AG04450 (cell line): ENCODE measurements at regions of chr2 and their contacts with region 1.

Region 1: DNA sequence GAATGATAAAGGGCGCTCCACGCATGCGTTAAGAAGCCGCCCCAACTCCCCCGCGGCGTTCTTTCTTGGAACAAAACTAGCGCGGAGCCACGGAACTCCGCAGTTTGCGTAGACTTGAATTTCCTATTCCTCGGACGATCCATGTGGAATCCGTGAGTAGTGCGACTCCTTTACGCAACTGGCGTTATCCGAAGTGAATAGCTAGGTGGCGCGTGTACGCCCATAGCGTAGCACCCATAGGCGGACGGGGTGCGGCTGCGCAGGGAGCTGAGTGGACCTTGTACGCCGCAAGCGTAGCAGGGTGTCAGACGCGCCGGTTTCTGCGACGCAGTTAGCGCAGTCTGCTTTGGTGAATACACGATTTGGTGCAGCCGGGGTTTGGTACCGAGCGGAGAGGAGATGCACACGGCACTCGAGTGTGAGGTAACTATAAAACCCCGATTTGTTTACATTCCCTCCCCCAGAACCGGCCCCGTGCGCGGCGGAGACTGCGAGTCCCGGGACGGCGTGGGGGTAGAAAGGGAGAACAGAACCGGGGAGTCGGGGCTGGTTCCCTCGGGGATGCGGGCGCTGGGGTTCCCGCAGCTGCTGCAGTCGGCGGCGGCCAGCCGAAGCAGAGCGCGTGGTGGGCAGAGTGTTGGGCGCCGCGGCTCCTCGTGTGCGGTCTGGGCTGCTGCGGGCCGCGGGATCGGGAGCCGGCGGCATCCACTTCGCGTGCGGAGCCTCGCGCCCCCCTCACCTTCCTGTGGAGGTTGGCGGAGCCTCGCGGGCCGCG is at the start of gene SLC39A10:
- DNase-seq: peak; percentile 96
- H3K4me3 ChIP-seq: peak within 1 kb of the TSS; percentile 83
- H3K27ac ChIP-seq: peak within 1 kb of the TSS; percentile 98
- H3K27me3 ChIP-seq: no peaks in the 10 kb centered on the region
- CTCF ChIP-seq: no peak
- polyA plus RNA-seq, gene SLC39A10: 26.1 and 38.5 TPM in 2 replicates

Region 2: DNA sequence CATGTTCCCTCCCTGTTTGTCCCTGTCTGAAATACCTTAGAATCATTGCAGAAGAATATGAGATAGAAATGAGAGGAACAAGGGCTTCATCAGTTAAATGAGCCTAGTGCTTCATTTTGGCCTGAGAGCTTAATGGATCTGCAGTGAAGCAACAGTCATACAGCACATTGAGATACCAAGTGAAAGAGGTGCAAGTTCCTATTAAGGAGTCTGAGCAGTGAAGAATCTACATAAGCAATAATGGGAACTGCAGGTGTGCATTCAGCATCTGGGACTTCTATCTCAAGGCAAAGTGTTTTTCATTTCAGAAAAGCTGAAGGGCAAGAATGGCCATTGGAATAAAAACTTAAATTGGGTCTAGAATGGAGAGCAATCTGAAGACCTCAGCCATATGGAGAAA is 323.2 kb before region 1 on chr2:
- CTCF ChIA-PET with region 1: interaction called, 11 read pairs
- POLR2A ChIA-PET with region 1: no interaction called
- DNase-seq: no peak
- H3K4me3 ChIP-seq: no peak overlapping the region
- H3K27ac ChIP-seq: no peak overlapping the region
- H3K27me3 ChIP-seq: no peaks in the 10 kb centered on the region
- CTCF ChIP-seq: no peak

Region 3: DNA sequence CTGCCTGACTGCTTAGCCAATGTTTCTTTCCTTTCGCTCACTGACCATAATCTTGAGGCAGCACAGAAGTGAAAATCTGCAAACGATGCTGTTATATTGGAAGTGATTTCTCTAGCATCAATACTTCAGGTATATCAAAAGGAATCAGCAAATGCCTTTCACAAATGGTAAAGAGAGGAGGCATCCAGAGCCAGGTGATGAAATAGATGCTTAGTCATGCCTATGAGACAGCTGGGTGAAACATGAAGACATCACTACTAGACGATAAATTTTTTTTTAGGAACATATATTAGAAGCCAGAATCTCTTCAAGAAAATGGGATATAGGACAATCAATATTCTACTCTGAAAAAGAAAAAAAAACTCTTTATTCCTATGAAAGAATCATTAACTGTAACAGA is 249.3 kb before region 1 on chr2:
- CTCF ChIA-PET with region 1: interaction called, 13 read pairs
- POLR2A ChIA-PET with region 1: no interaction called
- DNase-seq: no peak
- H3K4me3 ChIP-seq: no peak overlapping the region
- H3K27ac ChIP-seq: no peak overlapping the region
- H3K27me3 ChIP-seq: no peaks in the 10 kb centered on the region
- CTCF ChIP-seq: no peak

Region 4: GRCh38 chr2:195533771-195534642 is 123.0 kb before region 1 on chr2:
- CTCF ChIA-PET with region 1: interaction called, 9 read pairs
- POLR2A ChIA-PET with region 1: interaction called, 35 read pairs
- DNase-seq: peak; percentile 79
- H3K4me3 ChIP-seq: peak overlapping the region; percentile 20; the same call in 1 of the 2 replicates
- H3K27ac ChIP-seq: peak overlapping the region; percentile 93
- H3K27me3 ChIP-seq: no peaks in the 10 kb centered on the region
- CTCF ChIP-seq: no peak

Region 5: GRCh38 chr2:195672668-195673067 is 15.6 kb after region 1 on chr2:
- CTCF ChIA-PET with region 1: interaction called, 20 read pairs
- POLR2A ChIA-PET with region 1: no interaction called
- DNase-seq: no peak
- H3K4me3 ChIP-seq: no peak overlapping the region
- H3K27ac ChIP-seq: no peak overlapping the region
- H3K27me3 ChIP-seq: no peaks in the 10 kb centered on the region
- CTCF ChIP-seq: peak; percentile 16; the same call in 1 of the 2 replicates